CD14-positive monocyte (primary cell): ENCODE measurements at regions of chr1 and their contacts with region 1.

Region 1: DNA sequence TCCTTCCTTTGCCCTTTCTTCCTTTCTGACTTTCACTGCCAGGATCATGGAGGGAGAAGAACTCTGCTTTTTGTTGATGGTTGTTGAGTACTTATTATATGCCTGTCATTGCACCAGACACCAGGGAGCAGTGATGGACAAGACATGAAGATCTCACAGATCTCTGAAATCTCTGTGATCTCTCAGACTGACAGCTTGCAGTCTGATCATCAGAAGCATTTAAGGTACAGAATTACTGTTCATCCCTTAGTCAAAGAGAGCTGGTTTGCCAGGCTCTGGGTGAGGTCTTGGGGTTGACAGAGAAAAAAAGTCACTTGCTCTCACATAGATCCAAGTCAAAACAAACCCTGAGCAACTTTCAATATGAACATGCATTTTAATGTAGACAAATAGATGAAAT is 299.5 kb upstream of the FMN2 start:
- DNase-seq: peak; percentile 12 to 41 (median 36)
- H3K4me3 ChIP-seq: no peak overlapping the region
- H3K4me3 Mint-ChIP-seq: no peak overlapping the region
- H3K27ac ChIP-seq: no peak overlapping the region
- H3K27ac Mint-ChIP-seq: no peak overlapping the region
- H3K4me1 ChIP-seq: no peaks in the 10 kb centered on the region
- H3K4me1 Mint-ChIP-seq: no peaks in the 10 kb centered on the region
- H3K27me3 ChIP-seq: no peaks in the 10 kb centered on the region
- H3K27me3 Mint-ChIP-seq: peaks cover 0 to 2% (median 0%) of the 10 kb centered on the region in 3 donors
- CTCF ChIP-seq: peak; percentile 32

Region 2: DNA sequence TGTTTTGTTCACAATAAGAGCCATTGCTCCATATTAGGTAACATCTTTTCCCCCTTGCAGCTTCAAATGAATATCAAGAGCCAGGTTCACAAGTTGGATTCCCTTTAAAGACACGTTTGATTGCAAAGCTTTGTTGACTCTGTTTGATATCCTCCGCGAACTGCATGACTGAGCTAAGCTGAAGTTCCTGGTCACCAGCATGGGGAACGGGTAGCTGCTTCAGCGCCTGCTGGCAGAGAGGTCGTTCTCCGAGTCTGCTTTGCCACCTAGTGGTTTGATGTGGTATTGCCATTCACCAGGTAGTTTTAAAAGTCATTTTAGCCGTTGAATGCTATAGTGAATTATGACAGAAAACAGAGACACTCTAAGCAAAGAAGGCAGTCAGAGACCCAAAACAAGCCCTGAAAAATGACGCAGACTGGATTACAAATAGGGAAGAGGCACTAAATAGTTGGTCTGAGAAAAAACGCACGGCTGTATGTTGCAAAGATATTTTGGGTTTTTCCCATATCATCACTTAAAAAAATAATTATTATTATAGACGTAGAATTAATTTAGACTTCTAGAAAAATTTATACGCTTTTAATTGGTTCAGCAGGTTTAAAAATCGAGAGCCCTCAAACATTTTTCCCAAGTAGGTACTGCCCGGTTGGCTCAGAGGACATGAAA is 106.0 kb after region 1 on chr1:
- intact Hi-C with region 1: loop called (anchors 5 kb)
- DNase-seq: peak; percentile 77 to 85 (median 83)
- H3K4me3 ChIP-seq: peak overlapping the region in 2 of 3 experiments; percentile 20 to 59
- H3K4me3 Mint-ChIP-seq: peak overlapping the region; percentile 25 to 76
- H3K27ac ChIP-seq: no peak overlapping the region
- H3K27ac Mint-ChIP-seq: no peak overlapping the region
- H3K4me1 ChIP-seq: peaks cover 5 to 8% of the 10 kb centered on the region in 2 donors
- H3K4me1 Mint-ChIP-seq: peaks cover 8% of the 10 kb centered on the region
- H3K27me3 ChIP-seq: no peaks in the 10 kb centered on the region
- H3K27me3 Mint-ChIP-seq: peaks cover 1 to 4% (median 1%) of the 10 kb centered on the region in 3 donors
- CTCF ChIP-seq: peak; percentile 82

Region 3: DNA sequence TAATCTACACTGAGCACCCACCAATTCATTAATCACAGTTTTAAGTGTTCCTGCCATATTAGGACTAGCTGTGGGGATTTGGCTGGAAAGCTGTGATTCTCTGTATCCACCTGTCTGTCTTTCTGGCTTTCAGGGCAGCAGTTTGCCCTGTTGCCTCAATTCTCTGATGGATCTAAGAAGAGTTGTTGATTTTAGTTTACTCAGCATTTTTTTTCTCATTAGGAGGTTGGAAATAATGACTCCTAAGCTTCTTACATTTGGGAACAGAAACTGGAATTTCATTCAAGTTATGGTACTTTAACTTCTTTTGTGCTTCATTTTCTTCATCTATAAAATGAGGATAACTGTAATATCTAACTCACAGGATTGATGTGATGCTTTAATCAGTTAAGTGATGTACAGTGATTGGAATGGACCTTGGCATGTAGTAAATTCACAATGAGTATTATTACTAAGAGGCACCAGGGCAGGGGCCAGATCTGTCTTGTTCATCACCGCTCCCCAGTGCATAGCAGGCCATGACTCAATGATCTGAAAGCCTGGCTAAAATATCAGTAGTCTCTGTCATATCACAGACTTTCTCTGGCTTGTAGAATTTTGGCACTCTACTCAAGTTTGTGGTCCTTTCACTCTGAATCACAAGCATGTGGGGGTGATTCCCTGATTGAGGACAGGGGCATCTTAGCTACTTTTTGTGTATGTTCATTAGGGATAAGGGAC is 871.2 kb after region 1 on chr1:
- intact Hi-C with region 1: no loop called
- DNase-seq: no peak
- H3K4me3 ChIP-seq: no peak overlapping the region
- H3K4me3 Mint-ChIP-seq: no peak overlapping the region
- H3K27ac ChIP-seq: no peak overlapping the region
- H3K27ac Mint-ChIP-seq: no peak overlapping the region
- H3K4me1 ChIP-seq: no peaks in the 10 kb centered on the region
- H3K4me1 Mint-ChIP-seq: no peaks in the 10 kb centered on the region
- H3K27me3 ChIP-seq: no peaks in the 10 kb centered on the region
- H3K27me3 Mint-ChIP-seq: peaks cover 0 to 1% (median 0%) of the 10 kb centered on the region in 3 donors
- CTCF ChIP-seq: no peak